Mammary epithelial cell (primary cell): ENCODE measurements at regions of chr1 and their contacts with region 1.

Region 1: DNA sequence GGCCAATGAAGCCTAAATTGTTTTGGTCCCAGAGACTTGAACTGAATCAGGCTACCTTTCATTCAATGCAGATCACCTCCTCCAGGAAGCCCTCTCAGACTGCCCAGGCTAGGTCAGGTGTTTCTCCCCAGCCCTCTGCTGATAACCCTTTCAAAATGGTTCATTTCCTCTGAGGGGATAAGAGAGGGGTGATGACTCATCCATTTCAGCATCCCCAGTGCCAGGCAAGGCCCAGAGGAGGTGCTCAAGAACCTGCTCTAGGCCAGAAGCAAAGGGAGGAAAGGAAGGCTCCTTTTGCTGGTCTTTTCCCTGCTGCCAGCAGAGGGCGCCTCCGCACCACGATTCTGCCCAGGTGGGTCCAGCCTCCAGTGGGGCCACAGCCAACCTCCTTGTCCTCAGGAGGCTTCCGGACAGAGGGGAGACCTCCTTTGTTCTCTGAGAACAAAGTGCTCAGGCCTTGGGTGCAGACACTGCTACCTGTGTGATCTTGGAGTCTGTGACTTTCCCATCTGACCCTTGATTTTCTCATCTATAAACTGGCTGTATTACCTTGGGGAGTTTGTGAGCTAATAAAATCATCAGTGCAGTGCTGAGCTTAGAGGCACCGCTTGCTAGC is 45.3 kb upstream of the ARHGEF10L start:
- DNase-seq: peak; percentile 77
- H3K4me3 ChIP-seq: no peak overlapping the region
- H3K27ac ChIP-seq: no peak overlapping the region
- H3K4me1 ChIP-seq: peaks cover 6% of the 10 kb centered on the region
- H3K27me3 ChIP-seq: no peaks in the 10 kb centered on the region
- CTCF ChIP-seq: peak; percentile 92 to 93

Region 2: GRCh38 chr1:17125756-17126237 is 368.4 kb before region 1 on chr1:
- CTCF ChIA-PET with region 1: no interaction called
- dilution Hi-C with region 1: no loop called
- in situ Hi-C with region 1: no loop called
- intact Hi-C with region 1: loop called (anchors 10 kb)
- DNase-seq: peak; percentile 61
- H3K4me3 ChIP-seq: no peak overlapping the region
- H3K27ac ChIP-seq: no peak overlapping the region
- H3K4me1 ChIP-seq: peaks cover 31% of the 10 kb centered on the region
- H3K27me3 ChIP-seq: no peaks in the 10 kb centered on the region
- CTCF ChIP-seq: peak; percentile 86 to 96

Region 3: GRCh38 chr1:17419626-17420328 is 74.4 kb before region 1 on chr1:
- CTCF ChIA-PET with region 1: no interaction called
- dilution Hi-C with region 1: loop called (anchors 10 kb)
- in situ Hi-C with region 1: loop called in 1 of 2 experiments (anchors 10 kb)
- intact Hi-C with region 1: loop called (anchors 2 kb)
- DNase-seq: peak; percentile 30
- H3K4me3 ChIP-seq: no peak overlapping the region
- H3K27ac ChIP-seq: no peak overlapping the region
- H3K4me1 ChIP-seq: no peaks in the 10 kb centered on the region
- H3K27me3 ChIP-seq: no peaks in the 10 kb centered on the region
- CTCF ChIP-seq: peak; percentile 83 to 99

Region 4: GRCh38 chr1:17460245-17460644 is 34.0 kb before region 1 on chr1:
- CTCF ChIA-PET with region 1: no interaction called
- dilution Hi-C with region 1: no loop called
- in situ Hi-C with region 1: no loop called
- intact Hi-C with region 1: loop called (anchors 1 kb)
- DNase-seq: peak; percentile 98
- H3K4me3 ChIP-seq: peak overlapping the region in 2 of 3 experiments; percentile 28
- H3K27ac ChIP-seq: peak overlapping the region; percentile 86
- H3K4me1 ChIP-seq: peaks cover 5% of the 10 kb centered on the region
- H3K27me3 ChIP-seq: no peaks in the 10 kb centered on the region
- CTCF ChIP-seq: peak in 1 of 2 donors; percentile 2

Region 5: DNA sequence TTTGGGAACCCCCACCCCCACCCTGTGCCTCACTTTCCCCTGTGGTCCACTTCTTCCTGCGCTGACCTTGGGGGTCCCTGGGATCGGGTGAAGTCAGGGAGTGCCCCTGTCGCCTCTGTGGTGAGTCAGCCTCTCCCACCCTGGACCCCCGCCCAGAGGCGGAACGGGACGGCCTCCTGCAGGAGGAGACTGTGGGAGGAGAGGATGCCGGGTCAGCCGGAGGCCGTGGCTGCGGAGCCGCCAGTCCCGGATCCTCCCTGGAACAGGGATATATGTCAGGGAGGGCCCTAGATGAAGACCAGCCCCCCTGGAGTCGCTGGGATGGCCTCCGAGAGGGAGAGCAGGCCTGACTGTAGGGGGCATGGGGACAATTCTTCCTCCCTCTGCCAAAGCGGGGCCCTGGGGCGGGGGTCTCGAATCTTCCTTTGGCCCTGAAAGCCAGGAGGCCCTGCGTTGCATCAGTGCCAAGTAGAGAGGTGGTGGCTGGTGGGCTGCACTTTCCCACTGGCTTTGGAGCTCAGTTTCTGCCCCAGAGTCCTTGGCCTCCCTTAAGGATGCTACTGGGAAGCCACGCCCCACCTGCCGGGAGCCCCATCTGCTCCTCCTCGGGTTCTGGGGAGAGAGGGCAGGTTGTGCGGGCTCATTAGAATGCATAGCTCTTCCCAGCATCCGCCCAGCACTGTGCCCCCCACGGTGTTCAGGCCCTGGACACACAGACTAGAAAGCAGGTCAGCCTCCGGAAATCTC is 46.2 kb after region 1 on chr1:
- CTCF ChIA-PET with region 1: no interaction called
- dilution Hi-C with region 1: no loop called
- in situ Hi-C with region 1: no loop called
- intact Hi-C with region 1: no loop called
- DNase-seq: no peak
- H3K4me3 ChIP-seq: peak overlapping the region; percentile 49 to 56 (median 51)
- H3K27ac ChIP-seq: no peak overlapping the region
- H3K4me1 ChIP-seq: peaks cover 3% of the 10 kb centered on the region
- H3K27me3 ChIP-seq: peaks cover 9% of the 10 kb centered on the region
- CTCF ChIP-seq: no peak

Region 6: GRCh38 chr1:17606826-17607440 is 112.7 kb after region 1 on chr1:
- CTCF ChIA-PET with region 1: interaction called, 8 read pairs
- dilution Hi-C with region 1: loop called (anchors 5 kb)
- in situ Hi-C with region 1: no loop called
- intact Hi-C with region 1: loop called (anchors 2 kb)
- DNase-seq: peak; percentile 42
- H3K4me3 ChIP-seq: no peak overlapping the region
- H3K27ac ChIP-seq: no peak overlapping the region
- H3K4me1 ChIP-seq: no peaks in the 10 kb centered on the region
- H3K27me3 ChIP-seq: peaks cover 2% of the 10 kb centered on the region
- CTCF ChIP-seq: peak; percentile 90 to 98

Region 7: DNA sequence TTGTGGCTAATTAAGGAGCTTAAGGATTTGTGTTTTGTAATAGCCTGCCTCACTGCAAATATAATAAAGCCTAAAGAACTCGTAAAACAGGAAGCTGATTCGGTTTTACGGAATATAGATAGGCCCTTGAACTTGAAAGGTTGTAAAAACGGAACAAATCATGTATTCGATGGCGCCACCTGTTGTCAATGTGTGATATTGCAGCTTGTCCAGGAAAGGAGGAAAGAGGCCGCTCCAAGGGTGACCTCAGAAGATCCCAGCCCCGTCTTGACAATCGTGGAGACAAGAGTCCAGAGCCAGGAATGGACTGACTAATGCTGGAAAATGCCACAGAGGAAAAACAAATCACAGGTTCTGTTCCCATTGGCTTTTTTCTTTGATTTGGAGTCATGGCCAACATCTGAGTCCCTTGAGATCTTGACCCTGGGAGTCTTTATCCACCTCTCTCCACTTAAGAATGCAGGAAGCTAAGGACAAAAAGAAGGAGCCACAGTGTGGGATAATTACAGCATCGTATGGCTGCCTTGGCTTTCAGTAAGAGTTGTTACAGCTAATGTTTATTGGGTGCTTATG is 606.4 kb after region 1 on chr1:
- CTCF ChIA-PET with region 1: no interaction called
- dilution Hi-C with region 1: no loop called
- in situ Hi-C with region 1: no loop called
- intact Hi-C with region 1: loop called (anchors 10 kb)
- DNase-seq: peak; percentile 25
- H3K4me3 ChIP-seq: no peak overlapping the region
- H3K27ac ChIP-seq: no peak overlapping the region
- H3K4me1 ChIP-seq: no peaks in the 10 kb centered on the region
- H3K27me3 ChIP-seq: no peaks in the 10 kb centered on the region
- CTCF ChIP-seq: peak; percentile 68 to 75